ENCODE measurements at regions of chr7 and their contacts with region 1.

Region 1: GRCh38 chr7:29408841-29409243 is 154.8 kb upstream of the PRR15 start:
- DNase-seq: no peak
- ATAC-seq: peak; percentile 78
- H3K4me3 ChIP-seq: no peak overlapping the region
- H3K27ac ChIP-seq: no peak overlapping the region
- H3K4me1 ChIP-seq: no peaks in the 10 kb centered on the region
- H3K27me3 ChIP-seq: no peaks in the 10 kb centered on the region

Region 2: GRCh38 chr7:28921822-28922221 is 487.0 kb before region 1 on chr7:
- intact Hi-C with region 1: loop called (anchors 2 kb)
- DNase-seq: no peak
- ATAC-seq: peak; percentile 91
- H3K4me3 ChIP-seq: no peak overlapping the region
- H3K27ac ChIP-seq: no peak overlapping the region
- H3K4me1 ChIP-seq: no peaks in the 10 kb centered on the region
- H3K27me3 ChIP-seq: no peaks in the 10 kb centered on the region

Region 3: GRCh38 chr7:28926871-28927597 is 481.8 kb before region 1 on chr7:
- intact Hi-C with region 1: loop called in 1 of 2 experiments (anchors 2 kb)
- DNase-seq: peak; percentile 82 to 84
- ATAC-seq: peak; percentile 92
- H3K4me3 ChIP-seq: peak overlapping the region; percentile 44 to 76
- H3K27ac ChIP-seq: no peak overlapping the region
- H3K4me1 ChIP-seq: no peaks in the 10 kb centered on the region
- H3K27me3 ChIP-seq: no peaks in the 10 kb centered on the region

Region 4: DNA sequence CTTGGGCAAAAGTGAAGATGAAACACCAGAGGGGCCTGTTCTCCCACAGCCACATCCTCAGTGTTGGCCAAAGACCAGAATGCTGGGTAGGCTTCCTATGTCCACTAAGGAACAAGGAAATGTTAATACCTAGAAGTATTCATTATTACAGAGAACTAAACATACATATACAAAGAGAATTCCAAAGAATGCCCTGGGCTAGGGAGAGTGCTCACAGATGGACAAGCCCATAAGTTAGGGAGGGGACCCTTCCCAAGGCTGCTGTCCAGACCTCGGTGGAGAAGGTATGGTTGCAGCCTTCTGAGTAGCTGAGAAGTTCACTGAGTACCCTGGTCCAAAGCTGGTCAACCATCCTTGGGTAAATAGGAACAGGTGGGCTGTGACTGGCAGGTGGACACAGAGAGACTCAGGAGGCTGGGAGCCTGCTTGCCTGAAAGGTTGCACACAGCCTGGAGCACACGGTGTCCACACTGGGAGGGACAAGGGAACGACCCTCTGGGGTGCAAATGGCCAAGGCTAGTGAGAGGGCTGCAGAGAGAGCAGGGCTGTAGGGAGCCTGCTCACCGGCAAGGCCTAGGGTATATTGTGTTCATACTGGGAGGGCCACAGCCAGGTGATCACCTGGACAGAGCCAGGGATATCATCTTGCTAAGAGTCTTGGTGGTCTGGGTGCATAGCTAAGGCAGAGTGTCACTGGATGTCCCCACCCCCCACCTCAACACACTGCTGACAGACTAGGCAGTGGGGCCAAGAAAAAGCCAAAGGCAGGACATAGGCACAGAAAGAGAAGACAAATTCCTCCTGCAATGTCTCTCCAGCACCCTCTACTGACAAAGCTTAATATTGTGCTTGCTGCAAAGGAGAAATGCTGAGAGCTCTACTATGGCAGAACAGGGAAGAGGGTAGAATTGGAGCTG is 302.8 kb before region 1 on chr7:
- intact Hi-C with region 1: loop called (anchors 5 to 10 kb)
- DNase-seq: no peak
- ATAC-seq: peak; percentile 72
- H3K4me3 ChIP-seq: no peak overlapping the region
- H3K27ac ChIP-seq: no peak overlapping the region
- H3K4me1 ChIP-seq: no peaks in the 10 kb centered on the region
- H3K27me3 ChIP-seq: no peaks in the 10 kb centered on the region

Region 5: DNA sequence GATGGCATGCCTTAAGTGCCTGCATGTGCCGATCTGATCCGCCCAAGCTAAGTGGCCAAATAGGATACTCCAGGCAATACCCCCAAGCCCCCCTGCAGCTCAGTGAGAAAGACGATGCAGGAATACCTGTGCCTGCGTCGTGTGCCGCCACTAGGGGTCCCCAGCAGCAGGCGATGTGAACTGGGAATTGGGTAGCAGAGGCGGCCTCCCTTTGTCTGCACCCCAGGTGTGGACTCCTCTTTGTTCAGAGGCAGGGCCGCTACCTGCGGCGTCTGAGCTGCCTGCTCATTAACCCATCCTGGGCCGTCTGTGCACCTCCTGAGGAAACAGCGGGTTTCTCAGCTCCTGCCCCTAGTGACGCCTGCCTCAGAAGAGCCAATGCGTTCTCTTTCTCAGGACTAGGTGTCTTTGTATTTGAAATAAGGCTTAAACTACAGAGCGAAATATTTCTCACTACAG is 219.1 kb before region 1 on chr7:
- intact Hi-C with region 1: loop called (anchors 5 kb)
- DNase-seq: peak; percentile 72 to 87
- ATAC-seq: no peak
- H3K4me3 ChIP-seq: no peak overlapping the region
- H3K27ac ChIP-seq: no peak overlapping the region
- H3K4me1 ChIP-seq: no peaks in the 10 kb centered on the region
- H3K27me3 ChIP-seq: no peaks in the 10 kb centered on the region

Region 6: DNA sequence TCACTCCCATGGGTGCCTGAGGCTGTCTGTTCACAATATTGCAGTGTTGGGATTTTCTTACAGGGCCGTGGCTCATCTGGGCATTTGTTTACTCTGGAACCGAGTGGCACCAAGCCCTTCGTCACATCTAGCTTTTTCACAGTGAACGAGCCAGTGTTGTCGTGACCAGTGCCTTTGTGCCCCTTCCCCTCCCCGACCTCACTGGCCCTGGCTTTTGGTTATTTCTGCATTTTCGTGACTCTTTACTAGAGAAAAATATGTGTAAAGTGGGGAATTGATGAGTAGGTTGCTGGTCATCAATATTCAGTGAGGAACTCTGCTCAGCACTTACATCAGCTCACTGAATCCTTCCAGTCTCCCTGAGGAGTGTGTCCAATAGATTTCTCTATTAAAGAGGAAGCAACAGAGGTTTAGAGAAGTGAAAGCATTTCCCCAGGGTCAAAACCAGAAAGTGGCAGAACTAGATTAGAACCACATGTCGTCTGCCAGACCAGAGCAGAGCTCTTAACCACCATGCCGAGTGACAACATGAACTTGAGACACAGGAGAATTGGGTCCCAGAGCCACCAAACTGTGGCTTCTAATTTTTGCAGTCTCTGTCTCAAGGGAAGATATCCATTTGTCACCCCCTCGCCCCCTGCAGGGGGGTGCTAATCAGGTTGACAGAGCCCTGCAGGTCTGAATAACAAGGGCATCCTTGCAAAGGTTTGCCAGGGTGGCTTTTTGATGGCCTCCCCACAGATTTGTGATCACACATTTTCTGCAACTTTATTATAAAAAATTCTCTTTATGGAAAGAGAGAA is 88.9 kb before region 1 on chr7:
- intact Hi-C with region 1: loop called in 1 of 2 experiments (anchors 5 kb)
- DNase-seq: peak in 1 of 2 donors; percentile 59
- ATAC-seq: peak; percentile 56
- H3K4me3 ChIP-seq: no peak overlapping the region
- H3K27ac ChIP-seq: no peak overlapping the region
- H3K4me1 ChIP-seq: peaks cover 0 to 2% of the 10 kb centered on the region in 2 donors
- H3K27me3 ChIP-seq: no peaks in the 10 kb centered on the region

Region 7: GRCh38 chr7:29352062-29352461 is 56.8 kb before region 1 on chr7:
- intact Hi-C with region 1: no loop called
- DNase-seq: no peak
- ATAC-seq: no peak
- H3K4me3 ChIP-seq: no peak overlapping the region
- H3K27ac ChIP-seq: no peak overlapping the region
- H3K4me1 ChIP-seq: no peaks in the 10 kb centered on the region
- H3K27me3 ChIP-seq: peaks cover 0 to 4% of the 10 kb centered on the region in 2 donors

Region 8: GRCh38 chr7:29479301-29480200 is 70.7 kb after region 1 on chr7:
- intact Hi-C with region 1: no loop called
- DNase-seq: no peak
- ATAC-seq: peak; percentile 31
- H3K4me3 ChIP-seq: no peak overlapping the region
- H3K27ac ChIP-seq: peak overlapping the region; percentile 78 to 82
- H3K4me1 ChIP-seq: no peaks in the 10 kb centered on the region
- H3K27me3 ChIP-seq: no peaks in the 10 kb centered on the region